GM23248 (cell line): ENCODE measurements at regions of chr21 and their contacts with region 1.

Region 1: DNA sequence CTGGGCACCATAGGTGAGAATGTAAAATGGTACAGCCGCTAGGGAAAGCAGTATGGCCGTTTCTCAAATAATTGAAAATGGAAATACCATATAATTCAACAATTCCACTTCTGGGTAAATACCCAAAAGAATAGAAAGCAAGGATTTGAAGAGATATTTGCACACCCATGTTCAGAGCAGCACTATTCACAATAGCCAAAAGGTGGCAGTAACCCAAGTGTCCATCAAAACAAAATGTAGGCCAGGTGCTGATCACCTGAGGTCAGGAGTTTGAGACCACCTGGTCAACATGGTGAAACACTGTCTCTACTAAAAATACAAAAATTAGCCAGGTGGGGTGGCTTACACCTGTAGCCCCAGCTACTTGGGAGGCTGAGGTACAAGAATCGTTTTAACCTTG is 62.1 kb downstream of the OLIG1 start:
- DNase-seq: no peak
- H3K4me3 ChIP-seq: no peak overlapping the region
- H3K27ac ChIP-seq: no peak overlapping the region
- H3K4me1 ChIP-seq: no peaks in the 10 kb centered on the region
- H3K27me3 ChIP-seq: peaks cover 66% of the 10 kb centered on the region

Region 2: GRCh38 chr21:32994305-32994704 is 137.7 kb before region 1 on chr21:
- in situ Hi-C with region 1: loop called (anchors 10 kb)
- DNase-seq: peak; percentile 54
- H3K4me3 ChIP-seq: no peak overlapping the region
- H3K27ac ChIP-seq: no peak overlapping the region
- H3K4me1 ChIP-seq: no peaks in the 10 kb centered on the region
- H3K27me3 ChIP-seq: peaks cover 59% of the 10 kb centered on the region

Region 3: GRCh38 chr21:33185852-33186251 is 53.8 kb after region 1 on chr21:
- in situ Hi-C with region 1: no loop called
- DNase-seq: no peak
- H3K4me3 ChIP-seq: no peak overlapping the region
- H3K27ac ChIP-seq: no peak overlapping the region
- H3K4me1 ChIP-seq: no peaks in the 10 kb centered on the region
- H3K27me3 ChIP-seq: peaks cover 21% of the 10 kb centered on the region